Breast epithelium (tissue), 4 donors: ENCODE measurements at regions of chr1 and their contacts with region 1.

Region 1: GRCh38 chr1:27154991-27155781 is at the start of gene SLC9A1:
- DNase-seq: peak; percentile 96 to 97
- H3K4me3 ChIP-seq: peak within 1 kb of the TSS; percentile 80 to 92 (median 81)
- H3K27ac ChIP-seq: peak within 1 kb of the TSS; percentile 97 to 98
- H3K4me1 ChIP-seq: peaks cover 2 to 25% of the 10 kb centered on the region in 2 donors
- H3K27me3 ChIP-seq: no peaks in the 10 kb centered on the region
- CTCF ChIP-seq: peak; percentile 67 to 87 (median 75)
- POLR2A ChIP-seq: peak; percentile 87
- total RNA-seq, gene SLC9A1: 6.1 to 14.2 (median 13.8) TPM

Region 2: DNA sequence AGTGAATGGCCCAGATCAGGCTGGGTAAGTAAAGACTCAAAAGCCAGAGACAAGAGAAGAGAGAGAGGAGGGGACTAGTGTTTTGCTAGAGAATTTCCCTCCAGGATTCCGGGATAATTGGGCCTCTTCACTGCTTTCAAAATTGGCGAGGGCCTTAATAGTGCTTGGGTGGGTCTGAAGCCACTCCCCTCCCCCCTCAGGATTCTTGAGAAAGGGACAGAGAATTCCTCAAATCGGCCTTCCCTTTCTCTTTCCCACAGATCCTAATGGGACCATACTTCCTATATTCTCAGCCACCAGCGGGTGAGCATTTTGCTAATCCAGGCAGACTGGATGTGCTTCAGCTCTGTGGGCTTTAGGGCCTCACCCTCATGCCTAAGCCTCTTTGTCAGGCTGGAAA is 280.3 kb before region 1 on chr1:
- intact Hi-C with region 1: loop called (anchors 5 kb)
- DNase-seq: no peak
- H3K4me3 ChIP-seq: no peak overlapping the region
- H3K27ac ChIP-seq: no peak overlapping the region
- H3K4me1 ChIP-seq: no peaks in the 10 kb centered on the region
- H3K27me3 ChIP-seq: no peaks in the 10 kb centered on the region
- CTCF ChIP-seq: no peak
- POLR2A ChIP-seq: no peak

Region 3: GRCh38 chr1:27116697-27117096 is 38.5 kb before region 1 on chr1:
- intact Hi-C with region 1: loop called (anchors 5 kb)
- DNase-seq: no peak
- H3K4me3 ChIP-seq: no peak overlapping the region
- H3K27ac ChIP-seq: peak overlapping the region; percentile 87 to 95
- H3K4me1 ChIP-seq: peaks cover 16 to 27% of the 10 kb centered on the region in 2 donors
- H3K27me3 ChIP-seq: no peaks in the 10 kb centered on the region
- CTCF ChIP-seq: no peak
- POLR2A ChIP-seq: no peak